GM12878 (cell line): ENCODE measurements at regions of chr12 and their contacts with region 1.

Region 1: GRCh38 chr12:27305673-27306456 is 26.8 kb upstream of the BMAL2 start:
- DNase-seq: no peak
- ATAC-seq: peak; percentile 26; the same call in 2 of the 3 replicates
- H3K4me3 ChIP-seq: no peak overlapping the region
- H3K27ac ChIP-seq: no peak overlapping the region
- H3K4me1 ChIP-seq: peaks cover 35% of the 10 kb centered on the region
- H3K27me3 ChIP-seq: no peaks in the 10 kb centered on the region
- CTCF ChIP-seq: peak in 1 of 3 experiments; percentile 15; a peak in 1 of 6 replicates
- EP300 ChIP-seq: no peak
- POLR2A ChIP-seq: no peak
- RAD21 ChIP-seq: peak; percentile 54; the same call in 1 of the 2 replicates

Region 2: GRCh38 chr12:27014085-27014858 is 291.6 kb before region 1 on chr12 and contains the start of gene TM7SF3:
- CTCF ChIA-PET with region 1: interaction called, 294 read pairs
- POLR2A ChIA-PET with region 1: interaction called, 7 read pairs
- RAD21 ChIA-PET with region 1: interaction called, 216 read pairs
- SMC1A ChIA-PET with region 1: interaction called, 198 read pairs
- in situ Hi-C with region 1: no loop called
- intact Hi-C with region 1: loop called (anchors 2 kb)
- DNase-seq: peak; percentile 81
- ATAC-seq: peak; percentile 80
- H3K4me3 ChIP-seq: peak within 1 kb of the TSS; percentile 78
- H3K27ac ChIP-seq: peak within 1 kb of the TSS; percentile 94
- H3K4me1 ChIP-seq: peaks cover 16% of the 10 kb centered on the region
- H3K27me3 ChIP-seq: no peaks in the 10 kb centered on the region
- CTCF ChIP-seq: peak; percentile 85 to 99 (median 99)
- EP300 ChIP-seq: no peak
- POLR2A ChIP-seq: peak; percentile 81
- RAD21 ChIP-seq: peak; percentile 78
- polyA plus RNA-seq, gene TM7SF3: 31.4 to 34.1 TPM

Region 3: DNA sequence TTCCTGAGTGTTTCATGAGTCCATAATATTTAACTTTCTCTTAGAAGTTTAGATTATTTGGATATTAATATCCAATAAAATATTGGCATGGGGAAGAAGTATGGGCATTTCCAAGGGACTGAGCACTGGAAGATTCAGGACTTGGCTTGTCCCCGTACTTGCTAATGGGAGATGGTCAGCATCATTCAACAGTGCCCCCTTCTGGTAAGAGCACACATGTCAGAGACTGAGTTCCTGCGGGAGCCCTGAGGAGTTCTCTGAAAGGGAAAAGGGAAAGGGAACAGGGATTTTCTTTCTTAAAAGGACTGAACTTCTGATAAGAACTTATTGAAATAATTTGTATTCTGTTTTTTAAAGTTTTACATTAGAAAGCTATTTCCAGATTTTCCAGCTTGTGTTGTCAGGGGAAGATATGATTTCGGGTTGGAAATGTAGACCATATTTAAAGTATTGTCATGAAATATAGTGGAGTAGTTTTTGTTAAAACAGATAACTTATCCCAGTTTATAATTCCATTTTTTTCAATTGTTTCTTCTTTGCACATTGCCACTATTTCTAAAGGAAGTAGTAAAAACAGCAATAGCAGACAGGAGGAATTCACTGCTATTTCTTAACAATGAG is 163.7 kb before region 1 on chr12:
- CTCF ChIA-PET with region 1: interaction called, 19 read pairs
- POLR2A ChIA-PET with region 1: interaction called, 6 read pairs
- RAD21 ChIA-PET with region 1: interaction called, 52 read pairs
- SMC1A ChIA-PET with region 1: interaction called, 75 read pairs
- in situ Hi-C with region 1: no loop called
- intact Hi-C with region 1: loop called (anchors 2 kb)
- DNase-seq: no peak
- ATAC-seq: peak; percentile 80
- H3K4me3 ChIP-seq: no peak overlapping the region
- H3K27ac ChIP-seq: no peak overlapping the region
- H3K4me1 ChIP-seq: peaks cover 9% of the 10 kb centered on the region; the same call in 1 of the 2 replicates
- H3K27me3 ChIP-seq: no peaks in the 10 kb centered on the region
- CTCF ChIP-seq: peak; percentile 72 to 79 (median 76)
- EP300 ChIP-seq: no peak
- POLR2A ChIP-seq: no peak
- RAD21 ChIP-seq: peak; percentile 87

Region 4: GRCh38 chr12:27207615-27208413 is 98.1 kb before region 1 on chr12:
- CTCF ChIA-PET with region 1: interaction called, 16 read pairs
- POLR2A ChIA-PET with region 1: interaction called, 4 read pairs
- RAD21 ChIA-PET with region 1: interaction called, 43 read pairs
- SMC1A ChIA-PET with region 1: interaction called, 34 read pairs
- in situ Hi-C with region 1: no loop called
- intact Hi-C with region 1: loop called (anchors 5 kb)
- DNase-seq: peak; percentile 93
- ATAC-seq: peak; percentile 92
- H3K4me3 ChIP-seq: peak overlapping the region; percentile 44
- H3K27ac ChIP-seq: peak overlapping the region; percentile 97
- H3K4me1 ChIP-seq: peaks cover 35% of the 10 kb centered on the region
- H3K27me3 ChIP-seq: no peaks in the 10 kb centered on the region
- CTCF ChIP-seq: no peak
- EP300 ChIP-seq: peak; percentile 65 to 78; a peak in 3 of 4 replicates
- POLR2A ChIP-seq: no peak
- RAD21 ChIP-seq: peak; percentile 34; the same call in 1 of the 2 replicates

Region 5: GRCh38 chr12:27252934-27253333 is 52.9 kb before region 1 on chr12:
- CTCF ChIA-PET with region 1: interaction called, 179 read pairs
- POLR2A ChIA-PET with region 1: interaction called, 10 read pairs
- RAD21 ChIA-PET with region 1: interaction called, 282 read pairs
- SMC1A ChIA-PET with region 1: interaction called, 269 read pairs
- in situ Hi-C with region 1: no loop called
- intact Hi-C with region 1: no loop called
- DNase-seq: no peak
- ATAC-seq: peak; percentile 56
- H3K4me3 ChIP-seq: no peak overlapping the region; the same call in 1 of the 2 replicates
- H3K27ac ChIP-seq: peak overlapping the region; percentile 48; the same call in 1 of the 2 replicates
- H3K4me1 ChIP-seq: 0 out of 2 replicates have a peak, but pooled peaks cover 5% of the 10 kb centered on the region
- H3K27me3 ChIP-seq: no peaks in the 10 kb centered on the region
- CTCF ChIP-seq: no peak
- EP300 ChIP-seq: no peak
- POLR2A ChIP-seq: no peak
- RAD21 ChIP-seq: no peak

Region 6: DNA sequence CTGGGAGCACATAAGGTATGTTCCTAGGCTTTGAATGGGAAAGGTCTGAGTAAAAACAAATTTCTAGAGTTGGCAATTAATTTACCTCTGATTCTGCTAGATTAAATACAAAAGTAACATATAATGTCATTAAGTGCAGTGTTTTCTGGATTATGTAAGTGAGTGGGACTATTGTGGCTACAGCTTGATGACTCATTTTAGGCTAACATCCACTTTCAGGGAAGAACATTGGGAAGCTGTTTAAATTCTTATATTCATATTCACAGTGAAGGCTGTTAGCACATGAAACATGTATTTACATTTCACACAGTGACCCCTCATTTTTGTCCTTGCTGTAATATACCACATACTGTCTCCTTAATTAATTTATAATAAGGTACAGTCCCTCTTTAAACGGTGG is 13.5 kb after region 1 on chr12:
- CTCF ChIA-PET with region 1: interaction called, 41 read pairs
- POLR2A ChIA-PET with region 1: interaction called, 3 read pairs
- RAD21 ChIA-PET with region 1: interaction called, 64 read pairs
- SMC1A ChIA-PET with region 1: interaction called, 207 read pairs
- in situ Hi-C with region 1: no loop called
- intact Hi-C with region 1: no loop called
- DNase-seq: no peak
- ATAC-seq: no peak
- H3K4me3 ChIP-seq: no peak overlapping the region
- H3K27ac ChIP-seq: no peak overlapping the region
- H3K4me1 ChIP-seq: no peaks in the 10 kb centered on the region
- H3K27me3 ChIP-seq: no peaks in the 10 kb centered on the region
- CTCF ChIP-seq: no peak
- EP300 ChIP-seq: no peak
- POLR2A ChIP-seq: no peak
- RAD21 ChIP-seq: no peak

Region 7: DNA sequence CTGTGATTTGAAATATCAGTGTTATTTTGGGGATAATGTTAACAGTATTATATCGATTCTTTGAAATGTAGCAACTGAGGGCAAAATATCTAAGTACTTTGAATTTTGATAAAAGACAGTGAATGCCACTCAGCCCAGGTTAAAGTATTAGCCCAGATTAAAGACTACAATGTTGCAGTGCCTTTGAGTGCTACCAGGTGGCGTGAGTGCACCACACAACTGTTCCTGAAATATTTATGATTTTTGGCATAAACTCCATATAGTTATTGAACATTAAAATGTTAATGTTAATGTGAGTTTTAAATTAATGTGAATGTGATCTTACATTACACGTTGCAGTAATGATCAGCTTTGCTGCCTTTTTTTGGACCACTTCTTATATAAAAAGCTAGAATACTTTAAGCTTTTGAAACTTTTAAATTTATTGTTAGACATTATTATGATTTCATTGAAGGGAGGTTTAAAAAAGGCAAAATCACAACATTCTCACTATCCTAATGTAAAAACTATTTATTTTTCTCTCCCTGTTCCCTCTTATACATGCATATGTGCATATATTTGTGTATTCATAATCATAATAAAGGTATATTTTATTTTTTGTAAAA is 427.3 kb after region 1 on chr12:
- CTCF ChIA-PET with region 1: no interaction called
- POLR2A ChIA-PET with region 1: no interaction called
- RAD21 ChIA-PET with region 1: no interaction called
- SMC1A ChIA-PET with region 1: no interaction called
- in situ Hi-C with region 1: no loop called
- intact Hi-C with region 1: no loop called
- DNase-seq: no peak
- ATAC-seq: peak; percentile 83
- H3K4me3 ChIP-seq: no peak overlapping the region
- H3K27ac ChIP-seq: no peak overlapping the region
- H3K4me1 ChIP-seq: no peaks in the 10 kb centered on the region
- H3K27me3 ChIP-seq: no peaks in the 10 kb centered on the region
- CTCF ChIP-seq: peak; percentile 70 to 86 (median 81)
- EP300 ChIP-seq: no peak
- POLR2A ChIP-seq: no peak
- RAD21 ChIP-seq: peak; percentile 96